Gastrocnemius medialis (tissue), 4 donors: ENCODE measurements at regions of chr1 and their contacts with region 1.

Region 1: GRCh38 chr1:87084244-87084836 is 169.9 kb downstream of the HS2ST1 start:
- DNase-seq: no peak
- ATAC-seq: no peak
- H3K4me3 ChIP-seq: no peak overlapping the region
- H3K27ac ChIP-seq: no peak overlapping the region
- H3K4me1 ChIP-seq: no peaks in the 10 kb centered on the region
- H3K27me3 ChIP-seq: no peaks in the 10 kb centered on the region
- CTCF ChIP-seq: peak; percentile 19 to 77 (median 46)
- POLR2A ChIP-seq: no peak

Region 2: GRCh38 chr1:86380257-86380861 is 704.0 kb before region 1 on chr1:
- in situ Hi-C with region 1: no loop called
- intact Hi-C with region 1: loop called (anchors 10 kb)
- DNase-seq: no peak
- ATAC-seq: peak; percentile 45 to 75
- H3K4me3 ChIP-seq: no peak overlapping the region
- H3K27ac ChIP-seq: no peak overlapping the region
- H3K4me1 ChIP-seq: no peaks in the 10 kb centered on the region
- H3K27me3 ChIP-seq: no peaks in the 10 kb centered on the region
- CTCF ChIP-seq: peak; percentile 60 to 83 (median 73)
- POLR2A ChIP-seq: no peak

Region 3: GRCh38 chr1:86470859-86471258 is 613.5 kb before region 1 on chr1:
- in situ Hi-C with region 1: loop called in 1 of 4 experiments (anchors 10 kb)
- intact Hi-C with region 1: loop called (anchors 2 kb)
- DNase-seq: no peak
- ATAC-seq: no peak
- H3K4me3 ChIP-seq: no peak overlapping the region
- H3K27ac ChIP-seq: no peak overlapping the region
- H3K4me1 ChIP-seq: no peaks in the 10 kb centered on the region
- H3K27me3 ChIP-seq: no peaks in the 10 kb centered on the region
- CTCF ChIP-seq: no peak
- POLR2A ChIP-seq: no peak

Region 4: GRCh38 chr1:86696522-86696921 is 387.8 kb before region 1 on chr1:
- in situ Hi-C with region 1: loop called in 1 of 4 experiments (anchors 10 kb)
- intact Hi-C with region 1: no loop called
- DNase-seq: no peak
- ATAC-seq: no peak
- H3K4me3 ChIP-seq: no peak overlapping the region
- H3K27ac ChIP-seq: no peak overlapping the region
- H3K4me1 ChIP-seq: no peaks in the 10 kb centered on the region
- H3K27me3 ChIP-seq: no peaks in the 10 kb centered on the region
- CTCF ChIP-seq: no peak
- POLR2A ChIP-seq: no peak

Region 5: GRCh38 chr1:86822459-86822858 is 261.9 kb before region 1 on chr1:
- in situ Hi-C with region 1: no loop called
- intact Hi-C with region 1: no loop called
- DNase-seq: no peak
- ATAC-seq: no peak
- H3K4me3 ChIP-seq: no peak overlapping the region
- H3K27ac ChIP-seq: no peak overlapping the region
- H3K4me1 ChIP-seq: no peaks in the 10 kb centered on the region
- H3K27me3 ChIP-seq: no peaks in the 10 kb centered on the region
- CTCF ChIP-seq: no peak
- POLR2A ChIP-seq: no peak

Region 6: DNA sequence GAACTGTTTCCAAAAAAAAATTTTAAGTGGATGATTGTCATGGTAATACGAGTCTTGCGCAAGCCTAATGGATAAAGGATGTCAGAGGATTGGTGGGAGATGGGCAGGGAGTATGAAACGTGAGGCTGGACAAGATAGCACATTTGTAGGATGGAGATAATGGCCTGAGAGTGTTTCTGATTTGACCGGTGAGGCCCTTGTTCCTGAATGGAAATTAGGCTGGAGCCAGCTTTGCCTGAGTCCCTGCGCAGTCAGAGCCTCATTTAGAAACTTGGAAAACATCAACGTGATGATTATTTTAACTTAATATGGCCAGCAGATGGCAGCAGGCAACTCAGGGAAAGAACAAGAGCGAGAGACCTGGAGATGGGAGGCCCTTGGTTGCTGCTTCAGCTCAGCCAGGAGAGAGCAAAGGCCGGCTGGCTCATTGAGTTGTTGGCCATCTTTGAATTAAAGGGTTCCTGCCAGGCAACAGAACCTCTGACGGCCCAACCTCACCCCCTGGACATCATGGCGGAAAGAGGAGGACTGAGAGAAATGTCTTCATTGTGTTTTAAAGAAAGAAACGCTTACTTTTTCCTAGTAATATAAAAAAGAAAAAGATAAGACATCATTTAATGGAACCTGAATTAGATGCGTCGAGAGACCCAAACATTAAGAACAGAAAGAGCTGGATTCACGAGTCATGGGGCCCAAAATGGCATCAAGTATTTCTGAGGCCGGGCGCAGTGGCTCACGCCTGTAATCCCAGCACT is 250.7 kb before region 1 on chr1:
- in situ Hi-C with region 1: loop called (anchors 5 to 10 kb)
- intact Hi-C with region 1: loop called (anchors 1 kb)
- DNase-seq: peak; percentile 41 to 66
- ATAC-seq: peak; percentile 96 to 97
- H3K4me3 ChIP-seq: no peak overlapping the region
- H3K27ac ChIP-seq: no peak overlapping the region
- H3K4me1 ChIP-seq: no peaks in the 10 kb centered on the region
- H3K27me3 ChIP-seq: no peaks in the 10 kb centered on the region
- CTCF ChIP-seq: peak; percentile 51 to 70 (median 64)
- POLR2A ChIP-seq: no peak

Region 7: DNA sequence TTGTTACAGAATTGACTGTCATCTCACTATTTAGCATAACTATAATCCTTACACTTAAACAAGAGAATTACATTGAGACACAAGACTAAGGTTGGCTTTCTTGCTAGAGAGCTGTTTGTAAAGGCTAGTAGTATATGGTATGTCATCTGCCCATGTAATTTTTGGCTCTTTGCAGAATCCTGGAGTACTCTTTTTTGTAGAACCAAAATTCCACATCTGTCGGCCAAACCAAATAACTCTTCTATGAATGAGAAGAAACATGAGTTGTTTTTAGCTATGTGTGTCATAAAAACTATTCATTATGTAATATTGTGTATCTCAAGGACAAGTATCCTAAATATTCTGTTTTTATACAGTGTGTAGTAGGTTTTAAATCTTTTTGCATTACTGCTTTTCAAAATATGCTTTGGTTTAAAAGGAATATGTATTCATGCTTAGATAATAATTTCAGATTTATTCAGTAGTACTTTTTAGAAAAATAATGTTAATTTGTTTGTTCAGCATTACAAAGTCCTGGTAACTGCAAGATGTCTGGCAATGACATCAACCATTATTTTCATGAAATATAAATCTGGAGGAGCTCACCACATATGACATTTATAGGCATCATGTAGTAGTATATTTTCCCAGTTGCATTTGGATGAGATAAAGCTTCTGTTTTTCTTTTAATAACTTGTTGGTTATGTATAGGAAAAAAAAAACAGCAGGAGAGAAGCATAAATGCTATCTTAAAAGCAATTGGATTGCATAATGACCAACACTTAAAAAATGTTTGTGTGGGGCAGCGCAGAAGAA is 10.1 kb before region 1 on chr1:
- in situ Hi-C with region 1: no loop called
- intact Hi-C with region 1: no loop called
- DNase-seq: no peak
- ATAC-seq: no peak
- H3K4me3 ChIP-seq: no peak overlapping the region
- H3K27ac ChIP-seq: no peak overlapping the region
- H3K4me1 ChIP-seq: peaks cover 0 to 6% of the 10 kb centered on the region in 2 donors
- H3K27me3 ChIP-seq: no peaks in the 10 kb centered on the region
- CTCF ChIP-seq: no peak
- POLR2A ChIP-seq: no peak

Region 8: GRCh38 chr1:87437663-87438295 is 353.4 kb after region 1 on chr1:
- in situ Hi-C with region 1: no loop called
- intact Hi-C with region 1: no loop called
- DNase-seq: no peak
- ATAC-seq: no peak
- H3K4me3 ChIP-seq: no peak overlapping the region
- H3K27ac ChIP-seq: no peak overlapping the region
- H3K4me1 ChIP-seq: peaks cover 0 to 5% of the 10 kb centered on the region in 2 donors
- H3K27me3 ChIP-seq: no peaks in the 10 kb centered on the region
- CTCF ChIP-seq: no peak
- POLR2A ChIP-seq: no peak